Activated CD8-positive, alpha-beta T cell treated with anti-CD3 and anti-CD28 coated beads, Interleukin-2, amount 10 ng/mL, durations not matched to agents 7 days and 5 days (primary cell): ENCODE measurements at regions of chr2 and their contacts with region 1.

Region 1: GRCh38 chr2:177338177-177338721 is 54.3 kb upstream of the AGPS start:
- DNase-seq: no peak
- ATAC-seq: no peak
- H3K4me3 Mint-ChIP-seq: no peak overlapping the region
- H3K27ac Mint-ChIP-seq: peak overlapping the region; percentile 13
- H3K4me1 Mint-ChIP-seq: peaks cover 6% of the 10 kb centered on the region
- H3K27me3 Mint-ChIP-seq: no peaks in the 10 kb centered on the region

Region 2: GRCh38 chr2:177078416-177078815 is 259.8 kb before region 1 on chr2:
- CTCF ChIA-PET with region 1: no interaction called
- POLR2A ChIA-PET with region 1: no interaction called
- DNase-seq: no peak
- ATAC-seq: no peak
- H3K4me3 Mint-ChIP-seq: no peak overlapping the region
- H3K27ac Mint-ChIP-seq: no peak overlapping the region
- H3K4me1 Mint-ChIP-seq: no peaks in the 10 kb centered on the region
- H3K27me3 Mint-ChIP-seq: peaks cover 7% of the 10 kb centered on the region

Region 3: GRCh38 chr2:177187631-177188312 is 150.5 kb before region 1 on chr2:
- CTCF ChIA-PET with region 1: no interaction called
- POLR2A ChIA-PET with region 1: no interaction called
- DNase-seq: no peak
- ATAC-seq: no peak
- H3K4me3 Mint-ChIP-seq: no peak overlapping the region
- H3K27ac Mint-ChIP-seq: no peak overlapping the region
- H3K4me1 Mint-ChIP-seq: peaks cover 2% of the 10 kb centered on the region
- H3K27me3 Mint-ChIP-seq: peaks cover 10% of the 10 kb centered on the region

Region 4: DNA sequence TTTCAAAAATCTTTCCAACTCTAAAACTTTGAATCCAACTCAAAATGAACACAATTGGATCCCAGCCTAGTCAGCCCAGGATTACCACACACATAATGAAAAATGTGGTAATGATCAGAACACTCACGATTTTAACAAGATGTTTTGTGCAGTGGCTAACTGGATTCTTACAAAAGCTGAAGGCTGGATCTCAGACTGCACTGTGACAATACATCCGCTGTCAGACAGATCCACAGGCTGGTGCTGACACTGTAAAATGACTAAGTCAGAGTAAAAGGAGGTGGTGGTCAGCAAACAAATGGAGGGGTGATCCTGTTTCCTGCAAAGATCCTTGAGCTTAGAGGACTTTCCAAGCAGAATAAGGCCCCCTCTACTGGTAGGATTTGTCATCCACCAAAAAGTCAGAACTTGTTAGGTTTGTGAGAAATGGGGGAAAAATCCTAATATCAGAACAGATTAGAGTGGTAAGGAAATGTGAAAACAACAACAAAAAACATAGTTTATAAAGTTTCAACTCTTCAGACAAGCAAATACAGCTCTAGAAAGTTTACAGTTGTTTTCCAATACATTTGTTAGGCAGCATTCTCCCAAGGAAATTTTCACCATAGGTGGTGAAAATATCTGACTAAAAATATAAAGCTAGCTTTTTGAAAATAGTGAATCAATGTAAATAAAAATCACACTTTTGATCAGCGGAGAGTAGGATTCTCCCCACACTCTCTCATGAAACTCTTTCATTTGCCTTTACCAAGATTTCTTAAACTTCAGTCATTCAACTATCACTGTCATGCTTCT is 266.2 kb after region 1 on chr2:
- CTCF ChIA-PET with region 1: interaction called, 18 read pairs
- POLR2A ChIA-PET with region 1: no interaction called
- DNase-seq: no peak
- ATAC-seq: no peak
- H3K4me3 Mint-ChIP-seq: no peak overlapping the region
- H3K27ac Mint-ChIP-seq: no peak overlapping the region
- H3K4me1 Mint-ChIP-seq: peaks cover 3% of the 10 kb centered on the region
- H3K27me3 Mint-ChIP-seq: peaks cover 11% of the 10 kb centered on the region

Region 5: DNA sequence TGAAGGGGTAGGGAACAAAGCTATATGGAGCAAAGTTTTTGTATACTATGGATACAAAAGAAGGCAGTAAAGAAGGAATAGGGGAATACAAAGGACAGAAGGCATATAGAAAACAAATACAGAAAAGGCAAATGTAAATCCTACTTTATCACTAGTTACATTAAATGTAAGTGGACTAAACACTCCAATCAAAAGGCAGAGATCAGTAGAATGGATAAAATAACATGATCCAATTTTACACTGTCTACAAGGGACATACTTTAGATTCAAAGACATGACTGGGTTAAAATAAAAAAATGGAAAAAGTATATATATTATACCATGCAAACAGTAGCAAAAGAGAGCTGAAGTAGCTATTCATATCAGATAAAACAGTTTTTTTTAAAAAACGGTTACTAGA is 519.3 kb after region 1 on chr2:
- CTCF ChIA-PET with region 1: no interaction called
- POLR2A ChIA-PET with region 1: no interaction called
- DNase-seq: no peak
- ATAC-seq: no peak
- H3K4me3 Mint-ChIP-seq: no peak overlapping the region
- H3K27ac Mint-ChIP-seq: no peak overlapping the region
- H3K4me1 Mint-ChIP-seq: no peaks in the 10 kb centered on the region
- H3K27me3 Mint-ChIP-seq: peaks cover 6% of the 10 kb centered on the region